GM10248 (cell line): ENCODE measurements at regions of chr5 and their contacts with region 1.

Region 1: DNA sequence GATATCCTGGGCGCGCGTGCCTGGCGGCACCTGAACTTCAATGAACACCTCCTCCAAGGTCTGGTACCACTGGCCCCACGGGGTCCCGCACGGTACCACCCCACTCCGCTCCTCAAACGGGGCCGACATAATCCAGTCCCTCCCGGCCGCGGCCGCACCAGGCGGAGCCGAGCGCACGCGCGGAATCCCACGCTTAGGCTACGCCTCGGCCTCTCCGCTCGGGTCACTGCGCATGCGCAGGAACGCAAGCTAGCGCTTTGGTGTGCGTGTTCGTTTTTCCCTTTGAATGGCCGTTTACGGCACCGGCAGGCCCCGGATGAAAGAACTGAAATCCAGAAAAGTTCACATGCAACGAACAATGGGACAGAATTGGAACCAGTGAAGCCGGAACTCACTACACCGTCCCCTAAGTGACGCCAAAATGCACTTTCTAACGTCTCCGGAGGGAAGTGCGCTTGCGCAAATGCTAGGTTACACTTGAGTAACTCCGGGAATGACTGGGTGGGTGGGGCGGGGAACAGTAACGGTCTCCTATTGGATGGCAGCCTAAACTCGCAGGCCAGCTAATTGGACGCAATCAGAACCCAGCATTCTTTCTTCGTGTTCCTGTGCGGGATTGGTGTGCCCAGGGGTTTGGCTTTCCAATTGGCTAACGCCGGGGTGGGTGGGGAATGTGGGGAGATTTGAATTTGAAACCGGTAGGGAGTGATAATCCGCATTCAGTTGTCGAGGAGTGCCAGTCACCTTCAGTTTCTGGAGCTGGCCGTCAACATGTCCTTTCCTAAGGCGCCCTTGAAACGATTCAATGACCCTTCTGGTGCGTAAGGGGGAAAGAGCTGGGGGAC is at the starts of genes HMMR and NUDCD2:
- DNase-seq: peak; percentile 91
- CTCF ChIP-seq: no peak

Region 2: DNA sequence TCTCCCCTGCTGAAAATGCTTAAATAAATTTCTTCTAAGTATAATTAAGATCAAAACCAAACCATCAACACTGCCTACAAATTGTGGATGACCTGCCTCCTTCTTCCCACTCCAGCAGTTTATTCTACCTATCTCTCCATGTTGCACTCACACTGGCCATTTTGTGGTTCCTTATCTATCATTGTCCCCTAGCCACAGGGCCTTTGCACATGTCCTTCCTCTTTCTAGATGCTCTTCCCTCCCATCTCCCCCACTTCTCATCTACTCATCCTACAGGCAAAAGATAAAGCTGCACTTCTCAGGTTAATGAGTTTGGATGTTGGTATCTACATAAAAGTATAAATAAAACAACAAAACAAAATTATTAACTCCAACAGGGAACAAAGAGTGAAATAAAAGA is 93.4 kb before region 1 on chr5:
- CTCF ChIA-PET with region 1: no interaction called
- POLR2A ChIA-PET with region 1: no interaction called
- DNase-seq: no peak
- CTCF ChIP-seq: no peak

Region 3: DNA sequence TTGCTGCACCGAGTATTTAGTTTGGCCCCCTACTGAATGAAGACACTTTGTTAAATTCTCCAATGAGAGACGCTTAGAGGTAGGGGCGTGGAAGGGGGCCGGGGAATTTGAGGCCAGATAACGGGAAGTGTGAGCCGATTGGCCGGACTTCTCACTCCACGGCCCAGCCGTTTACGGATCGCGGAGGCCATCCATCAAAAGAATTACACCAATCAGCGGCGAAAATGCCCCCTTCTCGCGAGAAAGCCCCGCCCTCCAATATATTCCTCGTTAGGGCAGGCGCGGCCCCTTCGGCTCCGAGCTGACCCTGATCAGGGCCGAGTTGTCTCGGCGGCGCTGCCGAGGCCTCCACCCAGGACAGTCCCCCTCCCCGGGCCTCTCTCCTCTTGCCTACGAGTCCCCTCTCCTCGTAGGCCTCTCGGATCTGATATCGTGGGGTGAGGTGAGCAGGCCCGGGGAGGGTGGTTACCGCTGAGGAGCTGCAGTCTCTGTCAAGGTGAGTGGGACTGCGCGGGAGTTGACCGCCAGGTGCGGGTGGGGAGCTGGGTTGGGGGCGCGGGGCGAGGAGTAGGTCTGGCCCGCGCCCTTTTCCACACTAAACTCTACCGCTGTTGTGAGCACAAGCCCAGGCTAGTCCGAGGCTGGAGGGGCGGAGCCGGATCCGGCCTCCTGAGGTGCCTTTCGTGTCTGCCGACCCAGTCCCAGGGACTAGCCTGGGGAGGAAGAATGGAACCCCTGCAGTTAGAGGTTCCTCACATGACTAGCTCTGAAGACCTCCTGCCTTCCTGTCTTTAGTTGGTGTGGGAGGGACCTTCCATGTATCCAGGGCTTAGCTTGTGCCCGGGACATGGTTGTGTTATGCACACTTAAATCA is 22.6 kb before region 1 on chr5 and contains the start of gene CCNG1:
- CTCF ChIA-PET with region 1: interaction called, 11 read pairs
- POLR2A ChIA-PET with region 1: interaction called, 19 read pairs
- DNase-seq: peak; percentile 95
- CTCF ChIP-seq: no peak

Region 4: DNA sequence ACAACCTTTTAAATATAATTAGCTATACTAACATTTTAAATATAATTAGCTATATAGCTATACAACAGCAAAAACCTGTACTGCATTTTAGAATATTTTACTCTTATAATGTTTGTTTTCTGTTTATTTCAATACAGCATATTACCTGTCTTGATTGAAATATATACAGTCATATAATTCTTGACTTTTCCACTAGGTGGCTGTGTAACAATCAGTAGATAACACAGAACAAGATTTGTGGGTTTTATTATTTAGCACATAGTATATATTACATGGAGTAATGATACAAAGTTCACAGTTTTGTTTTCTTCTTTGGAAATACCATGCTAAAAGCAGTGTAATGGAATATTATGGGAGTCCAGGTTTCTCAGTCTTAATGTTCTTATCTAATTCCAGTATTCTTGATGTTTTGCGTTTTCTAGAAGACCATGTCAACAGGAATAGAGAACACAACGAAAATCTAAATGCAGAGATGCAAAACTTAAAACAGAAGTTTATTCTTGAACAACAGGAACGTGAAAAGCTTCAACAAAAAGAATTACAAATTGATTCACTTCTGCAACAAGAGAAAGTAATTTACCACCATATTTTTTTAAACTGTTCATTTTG is 13.6 kb after region 1 on chr5:
- CTCF ChIA-PET with region 1: interaction called, 14 read pairs
- POLR2A ChIA-PET with region 1: interaction called, 3 read pairs
- DNase-seq: peak; percentile 21
- CTCF ChIP-seq: peak; percentile 28

Region 5: DNA sequence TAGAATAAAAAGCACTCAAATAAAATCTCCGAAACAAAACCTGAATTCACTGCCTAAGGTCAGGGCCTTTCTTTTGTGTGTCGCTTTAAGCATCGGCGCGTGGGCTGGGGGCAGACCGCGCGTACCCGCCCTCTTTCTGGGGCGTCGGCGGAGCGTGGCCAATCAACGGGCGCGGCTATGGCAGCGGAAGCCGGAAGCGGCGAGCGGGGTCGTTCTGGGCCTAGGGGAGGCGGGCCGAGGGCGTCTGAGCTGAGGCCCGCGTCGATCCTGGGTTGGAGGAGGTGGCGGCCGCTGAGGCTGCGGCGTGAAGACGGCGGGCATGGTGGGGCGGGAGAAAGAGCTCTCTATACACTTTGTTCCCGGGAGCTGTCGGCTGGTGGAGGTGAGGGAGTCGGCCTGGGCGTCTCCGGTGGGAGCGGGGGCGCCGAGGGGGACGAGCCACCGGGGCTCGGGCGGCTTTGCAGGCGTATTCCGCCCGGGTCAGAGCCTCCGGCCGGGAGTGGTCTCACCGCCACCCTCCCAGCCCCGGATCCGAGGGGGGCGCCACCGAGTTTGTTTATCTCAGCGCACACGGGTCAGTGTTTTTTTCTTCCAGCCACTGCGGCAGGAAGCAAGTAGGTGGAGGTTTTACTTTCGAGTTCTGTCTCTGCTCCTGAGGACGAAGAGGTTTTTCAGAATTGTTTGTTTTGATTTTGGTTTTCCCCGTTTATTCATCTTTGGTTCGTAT is 45.4 kb after region 1 on chr5 and contains the start of gene MAT2B:
- CTCF ChIA-PET with region 1: interaction called, 19 read pairs
- POLR2A ChIA-PET with region 1: interaction called, 5 read pairs
- DNase-seq: peak; percentile 94
- CTCF ChIP-seq: peak; percentile 69

Region 6: GRCh38 chr5:163565931-163566608 is 105.9 kb after region 1 on chr5:
- CTCF ChIA-PET with region 1: no interaction called
- POLR2A ChIA-PET with region 1: no interaction called
- DNase-seq: peak; percentile 23
- CTCF ChIP-seq: no peak

Region 7: DNA sequence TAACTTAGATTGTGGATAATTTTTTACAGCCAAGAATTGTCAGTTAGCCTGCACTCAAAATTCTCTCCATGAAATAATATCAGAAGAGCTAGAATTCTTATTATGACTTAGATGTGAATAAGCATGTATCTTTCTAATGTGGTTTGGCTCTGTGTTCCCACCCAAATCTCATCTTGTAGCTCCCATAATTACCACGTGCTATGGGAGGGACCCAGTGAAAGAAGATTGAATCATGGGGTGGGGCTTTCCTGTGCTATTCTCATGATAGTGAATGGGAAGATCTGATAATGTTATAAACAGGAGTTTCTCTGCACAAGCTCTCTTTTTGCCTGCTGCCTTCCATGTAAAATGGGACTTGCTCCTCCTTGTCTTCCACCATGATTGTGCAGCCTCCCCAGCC is 222.1 kb after region 1 on chr5:
- CTCF ChIA-PET with region 1: no interaction called
- POLR2A ChIA-PET with region 1: no interaction called
- DNase-seq: no peak
- CTCF ChIP-seq: no peak